Mammary epithelial cell (primary cell): ENCODE measurements at regions of chrX and their contacts with region 1.

Region 1: GRCh38 chrX:10254741-10255140 is 98.0 kb downstream of the CLCN4 start:
- DNase-seq: peak; percentile 40
- H3K4me3 ChIP-seq: no peak overlapping the region
- H3K27ac ChIP-seq: no peak overlapping the region
- H3K4me1 ChIP-seq: no peaks in the 10 kb centered on the region
- H3K27me3 ChIP-seq: no peaks in the 10 kb centered on the region
- CTCF ChIP-seq: peak in 1 of 2 donors; percentile 55

Region 2: GRCh38 chrX:10242026-10242425 is 12.7 kb before region 1 on chrX:
- CTCF ChIA-PET with region 1: interaction called, 13 read pairs
- dilution Hi-C with region 1: no loop called
- in situ Hi-C with region 1: no loop called
- intact Hi-C with region 1: no loop called
- DNase-seq: no peak
- H3K4me3 ChIP-seq: no peak overlapping the region
- H3K27ac ChIP-seq: no peak overlapping the region
- H3K4me1 ChIP-seq: peaks cover 8% of the 10 kb centered on the region
- H3K27me3 ChIP-seq: no peaks in the 10 kb centered on the region
- CTCF ChIP-seq: no peak

Region 3: GRCh38 chrX:10401239-10401638 is 146.5 kb after region 1 on chrX:
- CTCF ChIA-PET with region 1: no interaction called
- dilution Hi-C with region 1: no loop called
- in situ Hi-C with region 1: no loop called
- intact Hi-C with region 1: loop called (anchors 1 kb)
- DNase-seq: no peak
- H3K4me3 ChIP-seq: no peak overlapping the region
- H3K27ac ChIP-seq: no peak overlapping the region
- H3K4me1 ChIP-seq: no peaks in the 10 kb centered on the region
- H3K27me3 ChIP-seq: no peaks in the 10 kb centered on the region
- CTCF ChIP-seq: peak in 1 of 2 donors; percentile 20

Region 4: GRCh38 chrX:10597871-10598270 is 343.1 kb after region 1 on chrX:
- CTCF ChIA-PET with region 1: no interaction called
- dilution Hi-C with region 1: no loop called
- in situ Hi-C with region 1: no loop called
- intact Hi-C with region 1: loop called (anchors 1 kb)
- DNase-seq: no peak
- H3K4me3 ChIP-seq: no peak overlapping the region
- H3K27ac ChIP-seq: no peak overlapping the region
- H3K4me1 ChIP-seq: no peaks in the 10 kb centered on the region
- H3K27me3 ChIP-seq: no peaks in the 10 kb centered on the region
- CTCF ChIP-seq: peak; percentile 43 to 65

Region 5: DNA sequence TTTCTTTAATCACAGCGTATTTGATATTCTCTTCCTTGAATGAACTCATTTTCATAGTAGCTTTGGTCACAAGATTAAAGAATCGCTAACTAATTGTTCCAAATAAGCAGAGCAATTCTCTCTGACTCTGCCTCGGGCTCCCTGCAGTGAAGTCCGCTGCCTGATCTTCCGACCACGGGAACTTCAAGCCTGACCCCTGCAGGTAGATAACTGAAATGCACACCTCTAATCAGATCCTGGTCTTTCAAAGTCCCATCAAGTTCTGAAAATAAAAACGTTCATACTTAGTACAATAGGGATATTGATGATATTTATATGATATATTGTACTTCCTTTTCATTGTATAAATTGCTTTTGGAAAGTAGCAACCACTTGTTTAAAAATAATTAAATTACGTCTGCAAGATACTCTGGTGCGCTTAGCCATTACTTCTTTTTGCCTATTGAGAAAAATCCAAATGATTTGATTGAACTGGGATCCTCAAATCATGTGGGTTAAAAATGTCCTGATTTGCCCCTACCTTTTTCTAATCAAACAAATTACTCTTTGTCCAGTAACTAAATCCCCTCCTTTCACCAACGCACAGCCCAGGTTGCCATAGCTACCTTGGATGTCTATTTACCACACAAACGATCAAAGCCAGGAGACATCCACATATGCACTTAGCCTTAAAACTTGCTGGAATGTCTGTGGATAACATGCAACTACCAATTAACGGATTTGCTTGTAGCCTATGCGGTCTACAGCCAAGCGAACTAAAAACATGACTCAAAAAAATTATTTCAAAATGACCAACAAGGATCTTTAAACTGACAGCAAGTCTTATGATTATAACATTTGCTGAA is 361.4 kb after region 1 on chrX:
- CTCF ChIA-PET with region 1: no interaction called
- dilution Hi-C with region 1: no loop called
- in situ Hi-C with region 1: no loop called
- intact Hi-C with region 1: loop called (anchors 1 kb)
- DNase-seq: no peak
- H3K4me3 ChIP-seq: peak overlapping the region in 2 of 3 experiments; percentile 12 to 15
- H3K27ac ChIP-seq: peak overlapping the region; percentile 76
- H3K4me1 ChIP-seq: peaks cover 3% of the 10 kb centered on the region
- H3K27me3 ChIP-seq: no peaks in the 10 kb centered on the region
- CTCF ChIP-seq: peak; percentile 63 to 67

Region 6: GRCh38 chrX:10722851-10723250 is 468.1 kb after region 1 on chrX:
- CTCF ChIA-PET with region 1: no interaction called
- dilution Hi-C with region 1: no loop called
- in situ Hi-C with region 1: no loop called
- intact Hi-C with region 1: loop called (anchors 5 kb)
- DNase-seq: peak; percentile 23
- H3K4me3 ChIP-seq: no peak overlapping the region
- H3K27ac ChIP-seq: no peak overlapping the region
- H3K4me1 ChIP-seq: no peaks in the 10 kb centered on the region
- H3K27me3 ChIP-seq: no peaks in the 10 kb centered on the region
- CTCF ChIP-seq: peak; percentile 75 to 83